A549 (cell line): ENCODE measurements at regions of chr11 and their contacts with region 1.

Region 1: GRCh38 chr11:73625696-73626318 is 20.6 kb upstream of the PLEKHB1 start:
- DNase-seq: peak; percentile 74 to 97
- ATAC-seq: peak; percentile 95 to 96
- H3K4me3 ChIP-seq: peak overlapping the region; percentile 32
- H3K27ac ChIP-seq: peak overlapping the region; percentile 36 to 66; a peak in 5 of 6 replicates
- H3K4me1 ChIP-seq: no peaks in the 10 kb centered on the region
- CTCF ChIP-seq: peak; percentile 83
- EP300 ChIP-seq: no peak
- POLR2A ChIP-seq: no peak
- RAD21 ChIP-seq: peak; percentile 77 to 86

Region 2: DNA sequence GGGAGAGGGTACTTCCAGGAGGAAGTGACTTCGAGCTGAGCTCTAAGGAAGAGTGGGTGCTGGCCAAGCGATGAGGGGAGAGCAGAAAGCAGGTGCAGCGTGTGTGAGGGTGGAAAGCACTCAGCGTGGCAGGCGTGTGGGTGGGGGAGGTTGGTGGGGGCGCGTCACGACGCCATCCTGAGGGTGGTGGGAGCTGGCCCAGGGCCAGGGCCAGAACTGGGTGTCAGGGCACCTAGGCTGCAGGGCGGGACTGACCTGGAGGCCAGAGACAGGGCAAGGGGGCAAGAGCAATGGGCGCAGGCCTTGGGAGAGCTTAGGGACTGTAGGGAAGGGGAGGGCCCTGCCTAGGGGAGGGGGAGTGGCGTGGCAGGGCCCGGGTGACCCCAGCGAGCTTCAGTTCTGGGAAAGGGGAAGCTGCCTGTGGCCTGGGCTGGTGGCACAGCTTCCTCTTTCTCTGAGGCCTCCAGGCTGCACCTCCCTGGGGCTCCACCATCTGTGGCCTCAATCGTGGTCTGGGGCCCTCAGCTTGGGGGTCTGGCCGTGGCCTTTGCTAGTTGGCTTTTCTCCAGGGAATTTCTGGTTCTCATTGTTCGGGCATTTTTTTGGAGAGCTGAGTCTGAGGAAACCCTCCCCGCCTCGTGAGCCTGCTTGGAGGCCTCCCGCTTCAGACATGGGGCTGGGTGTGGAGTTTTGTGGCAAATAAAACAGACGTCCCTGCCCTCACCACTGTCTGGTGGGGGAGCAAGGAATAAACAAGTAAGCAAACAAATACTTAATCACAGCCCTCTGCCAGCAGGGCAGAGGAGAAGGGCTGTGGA is 240.7 kb before region 1 on chr11:
- CTCF ChIA-PET with region 1: no interaction called
- POLR2A ChIA-PET with region 1: no interaction called
- DNase-seq: no peak
- ATAC-seq: peak in 1 of 2 experiments; percentile 9; a peak in 3 of 6 replicates
- H3K4me3 ChIP-seq: no peak overlapping the region
- H3K27ac ChIP-seq: peak overlapping the region; percentile 43 to 80; a peak in 5 of 6 replicates
- H3K4me1 ChIP-seq: peaks cover 76% of the 10 kb centered on the region
- CTCF ChIP-seq: no peak
- EP300 ChIP-seq: no peak
- POLR2A ChIP-seq: no peak
- RAD21 ChIP-seq: no peak

Region 3: DNA sequence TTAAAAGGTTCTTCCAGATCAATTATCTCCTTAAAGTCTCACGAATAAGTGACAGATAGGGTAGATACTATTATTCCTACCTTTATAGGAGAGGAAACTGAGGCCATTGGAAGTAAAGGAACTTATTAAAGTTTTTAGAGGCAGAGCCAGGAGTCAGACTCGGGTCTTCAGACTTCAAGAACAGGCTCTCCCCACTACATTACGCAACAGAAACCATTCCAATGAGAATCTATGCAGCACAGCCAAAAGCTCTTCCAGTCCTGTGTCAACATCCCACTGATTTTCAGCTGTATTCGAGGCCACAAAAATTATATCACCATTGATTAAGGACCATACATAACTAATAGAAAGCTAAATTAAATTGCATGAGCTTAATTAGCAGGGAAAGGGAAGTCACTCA is 172.2 kb before region 1 on chr11:
- CTCF ChIA-PET with region 1: interaction called, 10 read pairs
- POLR2A ChIA-PET with region 1: no interaction called
- DNase-seq: no peak
- ATAC-seq: no peak
- H3K4me3 ChIP-seq: no peak overlapping the region
- H3K27ac ChIP-seq: no peak overlapping the region
- H3K4me1 ChIP-seq: no peaks in the 10 kb centered on the region
- CTCF ChIP-seq: no peak
- EP300 ChIP-seq: no peak
- POLR2A ChIP-seq: no peak
- RAD21 ChIP-seq: no peak

Region 4: GRCh38 chr11:73478738-73479347 is 147.0 kb before region 1 on chr11:
- CTCF ChIA-PET with region 1: interaction called, 20 read pairs
- POLR2A ChIA-PET with region 1: no interaction called
- DNase-seq: peak; percentile 51 to 61
- ATAC-seq: peak; percentile 85 to 93
- H3K4me3 ChIP-seq: no peak overlapping the region
- H3K27ac ChIP-seq: no peak overlapping the region
- H3K4me1 ChIP-seq: no peaks in the 10 kb centered on the region; the same call in 2 of the 3 replicates
- CTCF ChIP-seq: peak; percentile 89
- EP300 ChIP-seq: no peak
- POLR2A ChIP-seq: no peak
- RAD21 ChIP-seq: peak; percentile 61 to 68

Region 5: GRCh38 chr11:73612601-73613140 is 13.1 kb before region 1 on chr11:
- CTCF ChIA-PET with region 1: interaction called, 40 read pairs
- POLR2A ChIA-PET with region 1: no interaction called
- DNase-seq: no peak
- ATAC-seq: no peak
- H3K4me3 ChIP-seq: no peak overlapping the region
- H3K27ac ChIP-seq: no peak overlapping the region
- H3K4me1 ChIP-seq: no peaks in the 10 kb centered on the region
- CTCF ChIP-seq: no peak
- EP300 ChIP-seq: no peak
- POLR2A ChIP-seq: no peak
- RAD21 ChIP-seq: no peak

Region 6: DNA sequence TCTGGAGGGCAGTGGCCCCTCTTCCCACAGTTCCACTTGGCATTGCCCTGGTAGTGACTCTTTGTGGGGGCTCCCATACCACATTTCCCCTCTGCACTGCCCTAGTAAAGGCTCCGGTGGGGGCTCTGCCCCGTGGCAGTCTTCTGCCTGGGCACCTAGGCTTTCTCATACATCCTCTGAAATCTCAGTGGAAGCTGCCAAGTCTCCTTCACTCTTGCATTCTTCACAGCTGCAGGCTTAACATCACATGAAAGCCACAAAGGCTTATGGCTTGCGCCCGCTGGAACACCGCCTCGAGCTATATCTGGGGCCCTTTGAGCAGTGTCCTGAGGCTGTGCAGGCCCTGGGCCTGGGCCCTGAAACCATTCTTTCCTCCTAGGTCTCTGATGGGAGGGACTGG is 45.9 kb after region 1 on chr11:
- CTCF ChIA-PET with region 1: interaction called, 23 read pairs
- POLR2A ChIA-PET with region 1: no interaction called
- DNase-seq: no peak
- ATAC-seq: peak; percentile 8 to 40; a peak in 3 of 6 replicates
- H3K4me3 ChIP-seq: no peak overlapping the region
- H3K27ac ChIP-seq: no peak overlapping the region
- H3K4me1 ChIP-seq: no peaks in the 10 kb centered on the region
- CTCF ChIP-seq: no peak
- EP300 ChIP-seq: no peak
- POLR2A ChIP-seq: no peak
- RAD21 ChIP-seq: no peak